A673 (cell line): ENCODE measurements at regions of chr11 and their contacts with region 1.

Region 1: GRCh38 chr11:63768237-63769043 is at the start of gene ZFTA:
- DNase-seq: peak; percentile 85
- H3K4me3 ChIP-seq: peak within 1 kb of the TSS; percentile 63
- H3K27ac ChIP-seq: peak within 1 kb of the TSS; percentile 74
- H3K4me1 ChIP-seq: peaks cover 59% of the 10 kb centered on the region
- H3K27me3 ChIP-seq: no peaks in the 10 kb centered on the region
- CTCF ChIP-seq: peak; percentile 51; the same call in 1 of the 2 replicates
- total RNA-seq, gene ZFTA: 32.4 and 36.1 TPM in 2 replicates

Region 2: GRCh38 chr11:63738720-63739360 is 29.6 kb before region 1 on chr11:
- CTCF ChIA-PET with region 1: interaction called, 12 read pairs
- POLR2A ChIA-PET with region 1: no interaction called
- intact Hi-C with region 1: no loop called
- DNase-seq: peak; percentile 87
- H3K4me3 ChIP-seq: no peak overlapping the region
- H3K27ac ChIP-seq: no peak overlapping the region
- H3K4me1 ChIP-seq: peaks cover 14% of the 10 kb centered on the region
- H3K27me3 ChIP-seq: no peaks in the 10 kb centered on the region
- CTCF ChIP-seq: peak; percentile 98

Region 3: GRCh38 chr11:63829823-63830489 is 61.5 kb after region 1 on chr11:
- CTCF ChIA-PET with region 1: no interaction called
- POLR2A ChIA-PET with region 1: no interaction called
- intact Hi-C with region 1: loop called (anchors 5 kb)
- DNase-seq: peak; percentile 72
- H3K4me3 ChIP-seq: no peak overlapping the region
- H3K27ac ChIP-seq: no peak overlapping the region
- H3K4me1 ChIP-seq: no peaks in the 10 kb centered on the region
- H3K27me3 ChIP-seq: no peaks in the 10 kb centered on the region
- CTCF ChIP-seq: peak; percentile 67

Region 4: GRCh38 chr11:63896071-63896470 is 127.6 kb after region 1 on chr11:
- CTCF ChIA-PET with region 1: no interaction called
- POLR2A ChIA-PET with region 1: no interaction called
- intact Hi-C with region 1: loop called (anchors 5 kb)
- DNase-seq: no peak
- H3K4me3 ChIP-seq: no peak overlapping the region
- H3K27ac ChIP-seq: no peak overlapping the region
- H3K4me1 ChIP-seq: peaks cover 11% of the 10 kb centered on the region
- H3K27me3 ChIP-seq: no peaks in the 10 kb centered on the region
- CTCF ChIP-seq: no peak

Region 5: DNA sequence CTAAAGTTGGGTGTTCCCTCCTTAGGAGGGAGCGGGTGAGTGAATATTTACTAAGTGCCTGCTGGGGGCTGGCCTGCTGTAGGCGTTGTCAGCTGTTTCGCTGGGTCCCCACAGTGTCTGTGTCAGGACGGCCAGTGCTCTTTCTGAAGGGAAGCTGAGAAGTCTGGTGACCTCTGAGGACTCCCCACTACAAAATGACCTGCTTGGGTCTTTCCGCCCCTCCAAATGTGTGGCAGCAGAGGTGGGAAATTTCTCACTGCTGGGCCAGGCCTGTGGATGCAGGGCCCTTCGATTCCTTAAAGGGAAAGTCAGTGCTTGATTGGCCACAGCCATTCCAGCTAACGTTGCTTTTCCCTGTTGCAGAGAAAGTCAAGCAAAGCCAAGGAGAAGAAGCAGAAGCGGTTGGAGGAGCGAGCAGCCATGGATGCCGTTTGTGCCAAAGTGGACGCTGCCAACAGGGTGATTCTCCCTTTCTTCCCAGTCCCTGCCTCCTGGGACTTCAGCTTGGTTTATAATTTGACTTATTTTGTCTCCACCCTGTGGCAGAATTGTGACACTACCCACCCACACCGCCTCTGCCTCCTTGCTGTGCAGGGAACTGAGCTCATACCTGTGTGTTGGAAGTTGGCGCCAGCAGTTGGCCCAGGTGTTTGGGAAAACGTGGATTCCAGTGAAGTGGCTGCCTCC is 177.2 kb after region 1 on chr11:
- CTCF ChIA-PET with region 1: interaction called, 15 read pairs
- POLR2A ChIA-PET with region 1: no interaction called
- intact Hi-C with region 1: loop called (anchors 2 kb)
- DNase-seq: peak; percentile 90
- H3K4me3 ChIP-seq: no peak overlapping the region
- H3K27ac ChIP-seq: peak overlapping the region; percentile 39
- H3K4me1 ChIP-seq: peaks cover 7% of the 10 kb centered on the region
- H3K27me3 ChIP-seq: no peaks in the 10 kb centered on the region
- CTCF ChIP-seq: peak; percentile 84

Region 6: GRCh38 chr11:63986156-63986931 is 217.9 kb after region 1 on chr11 and contains the start of gene OTUB1:
- CTCF ChIA-PET with region 1: no interaction called
- POLR2A ChIA-PET with region 1: no interaction called
- intact Hi-C with region 1: loop called (anchors 10 kb)
- DNase-seq: peak; percentile 97
- H3K4me3 ChIP-seq: peak within 1 kb of the TSS; percentile 95
- H3K27ac ChIP-seq: peak within 1 kb of the TSS; percentile 84
- H3K4me1 ChIP-seq: peaks cover 28% of the 10 kb centered on the region
- H3K27me3 ChIP-seq: no peaks in the 10 kb centered on the region
- CTCF ChIP-seq: no peak
- total RNA-seq, gene OTUB1: 136 and 140 TPM in 2 replicates

Region 7: GRCh38 chr11:64284048-64284961 is 515.9 kb after region 1 on chr11 and contains the start of gene BAD:
- CTCF ChIA-PET with region 1: no interaction called
- POLR2A ChIA-PET with region 1: no interaction called
- intact Hi-C with region 1: no loop called
- DNase-seq: peak; percentile 97
- H3K4me3 ChIP-seq: peak within 1 kb of the TSS; percentile 87
- H3K27ac ChIP-seq: peak within 1 kb of the TSS; percentile 73
- H3K4me1 ChIP-seq: peaks cover 13% of the 10 kb centered on the region
- H3K27me3 ChIP-seq: no peaks in the 10 kb centered on the region
- CTCF ChIP-seq: no peak
- total RNA-seq, gene BAD: 48.4 and 62.2 TPM in 2 replicates